Cardiac septum (tissue), 1 donor: ENCODE measurements at regions of chr12 and their contacts with region 1.

Region 1: GRCh38 chr12:64099397-64099796 is 122.7 kb downstream of the KICS2 start:
- DNase-seq: no peak

Region 2: DNA sequence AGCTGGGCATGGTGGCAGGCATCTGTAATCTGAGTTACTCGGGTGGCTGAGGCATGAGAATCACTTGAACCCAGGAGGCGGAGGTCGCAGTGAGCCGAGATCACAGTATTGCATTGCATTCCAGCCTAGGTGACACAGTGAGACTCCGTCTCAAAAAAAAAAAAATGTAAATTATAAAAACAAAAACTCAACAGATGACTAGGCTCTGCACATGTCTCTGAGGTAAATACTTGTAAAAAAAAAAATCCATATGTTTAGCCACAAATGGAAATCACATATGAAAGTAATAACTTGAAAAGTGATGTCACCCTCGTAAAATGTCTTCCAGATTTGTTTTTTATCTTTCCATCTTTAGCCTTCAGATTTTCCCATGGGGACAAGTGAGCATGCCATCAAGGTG is 37.7 kb after region 1 on chr12:
- intact Hi-C with region 1: no loop called
- DNase-seq: no peak

Region 3: DNA sequence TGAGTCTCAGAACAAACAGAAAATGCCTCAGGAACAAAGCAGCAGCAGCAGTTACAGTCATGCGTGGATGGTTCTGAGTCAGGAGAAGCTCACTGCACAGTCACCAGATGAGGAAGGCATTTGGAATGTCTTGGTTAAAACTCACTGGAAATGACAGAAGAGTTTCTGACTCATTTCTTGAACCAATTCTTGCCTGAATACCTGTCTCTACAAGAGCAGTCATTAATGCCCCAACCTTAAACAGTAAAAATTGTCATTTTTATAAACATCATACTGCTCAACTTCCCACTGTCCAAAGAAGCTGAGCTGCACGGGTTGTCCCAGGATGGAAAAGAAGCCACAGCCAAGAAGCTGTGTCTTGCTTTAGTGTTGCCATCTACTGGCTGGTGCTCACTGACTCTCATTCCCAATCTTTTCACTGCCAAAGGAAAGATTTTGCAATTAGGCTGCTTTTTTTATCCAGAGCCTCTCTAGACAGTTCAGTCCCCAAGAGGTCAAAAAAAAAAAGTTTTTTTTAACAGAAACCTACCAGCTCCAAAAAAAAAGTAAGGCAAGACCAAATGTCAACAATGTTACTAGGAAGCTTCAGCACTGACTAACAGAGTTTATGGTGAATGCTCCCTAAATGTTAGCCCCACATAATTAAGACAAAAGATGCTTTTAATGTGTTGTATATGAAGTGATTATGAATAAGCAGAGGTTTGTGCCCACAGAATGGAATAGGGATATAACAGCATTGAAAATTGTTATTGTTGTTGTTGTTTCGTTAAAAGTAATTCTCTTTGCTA is 82.3 kb after region 1 on chr12:
- intact Hi-C with region 1: loop called (anchors 5 kb)
- DNase-seq: no peak

Region 4: GRCh38 chr12:64212119-64212746 is 112.8 kb after region 1 on chr12:
- intact Hi-C with region 1: no loop called
- DNase-seq: no peak